Dorsolateral prefrontal cortex (tissue), 120 donors: ENCODE measurements at regions of chr4 and their contacts with region 1.

Region 1: DNA sequence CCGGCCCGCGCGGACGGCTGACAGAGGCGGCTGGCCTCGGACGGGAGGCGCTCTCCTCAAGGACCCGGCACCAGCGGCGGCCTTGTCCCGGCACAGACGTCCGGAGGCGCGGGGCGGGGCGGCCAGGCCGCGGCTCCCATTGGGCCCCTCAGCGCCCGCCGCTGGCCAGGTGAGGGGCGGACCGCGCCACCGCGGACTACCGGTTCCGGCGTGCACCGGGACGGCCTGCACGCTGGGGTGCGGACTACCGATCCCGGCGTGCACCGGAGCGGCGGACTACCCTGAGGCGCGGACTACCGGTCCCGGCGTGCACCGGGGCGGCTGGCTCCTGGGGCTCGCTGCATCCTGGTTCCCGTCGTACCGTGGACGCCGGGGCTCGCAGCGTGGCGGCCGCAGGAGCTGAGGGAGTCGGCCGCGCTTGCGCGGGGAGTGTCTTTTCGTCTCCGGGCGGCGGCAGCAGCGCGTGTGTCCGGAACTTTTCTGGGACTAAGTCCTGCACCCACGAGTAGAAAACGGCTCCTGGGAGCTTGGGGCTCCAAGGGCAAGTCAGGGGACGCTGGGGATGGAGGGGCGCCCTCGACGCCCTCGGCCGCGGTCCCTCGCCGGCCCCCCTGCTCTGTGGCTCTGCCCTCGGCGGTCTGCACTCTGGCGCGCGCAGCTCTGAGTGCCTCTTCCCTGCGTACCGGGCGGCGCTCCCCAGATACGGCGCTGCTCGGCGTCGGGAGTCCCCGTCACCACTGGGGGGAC is at the start of gene LETM1:
- DNase-seq: peak; percentile 91 to 98 (median 96)
- H3K4me3 ChIP-seq: peak within 1 kb of the TSS; percentile 53 to 99 (median 93)
- H3K27ac ChIP-seq: peak within 1 kb of the TSS; percentile 14 to 96 (median 83)
- H3K27me3 ChIP-seq: no peaks in the 10 kb centered on the region
- CTCF ChIP-seq: peak in 41 of 56 donors; percentile 6 to 62 (median 33)
- total RNA-seq, gene LETM1: 36.9 to 61.2 (median 48.6) TPM

Region 2: GRCh38 chr4:1721004-1721665 is 135.1 kb before region 1 on chr4 and contains the starts of genes TACC3 and TMEM129:
- intact Hi-C with region 1: loop called in 1 of 2 experiments (anchors 5 kb)
- DNase-seq: peak; percentile 86 to 95 (median 94)
- H3K4me3 ChIP-seq: peak within 1 kb of the TSS; percentile 57 to 93 (median 83)
- H3K27ac ChIP-seq: peak within 1 kb of the TSS; percentile 42 to 96 (median 89)
- H3K27me3 ChIP-seq: no peaks in the 10 kb centered on the region
- CTCF ChIP-seq: peak in 20 of 56 donors; percentile 7 to 48 (median 20)
- total RNA-seq, gene TACC3: 2.6 to 15.4 (median 6.8) TPM
- total RNA-seq, gene TMEM129: 22.2 to 81.4 (median 37.9) TPM